Posterior cingulate gyrus (tissue), 11 donors: ENCODE measurements at regions of chr11 and their contacts with region 1.

Region 1: DNA sequence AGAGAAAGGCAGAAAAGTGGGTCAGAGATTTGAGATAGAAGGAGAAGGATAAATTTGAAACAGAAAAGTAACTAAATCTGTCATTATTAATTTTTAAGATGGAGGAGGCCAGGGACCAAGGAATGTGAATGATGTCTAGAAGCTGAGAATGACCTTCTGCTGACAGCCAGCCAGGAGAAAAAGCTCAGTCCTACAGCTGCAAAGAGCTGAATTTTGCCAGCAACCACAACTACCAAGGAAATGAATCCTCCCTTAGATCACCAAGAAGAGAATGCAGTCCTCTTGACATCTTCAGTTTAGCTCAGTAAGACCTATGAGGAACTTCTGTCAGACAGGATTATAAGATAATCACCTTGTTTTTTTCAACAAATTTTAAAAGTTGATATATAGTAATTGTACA is 538.2 kb downstream of the LRRC4C start:
- DNase-seq: no peak

Region 2: GRCh38 chr11:40974186-40974795 is 53.0 kb after region 1 on chr11:
- intact Hi-C with region 1: loop called (anchors 10 kb)
- DNase-seq: no peak